ENCODE measurements at regions of chr13 and their contacts with region 1.

Region 1: GRCh38 chr13:75876360-75877050 is 240.4 kb downstream of the LMO7 start:
- DNase-seq: peak in 8 of 9 donors; percentile 13 to 61 (median 45)
- ATAC-seq: peak; percentile 86
- H3K4me3 ChIP-seq: no peak overlapping the region
- H3K4me3 Mint-ChIP-seq: peak overlapping the region in 9 of 10 donors; percentile 16 to 78 (median 59)
- H3K27ac ChIP-seq: no peak overlapping the region
- H3K27ac Mint-ChIP-seq: peak overlapping the region in 2 of 9 donors; percentile 9 to 90
- H3K4me1 ChIP-seq: peaks cover 0 to 3% of the 10 kb centered on the region in 2 donors
- H3K4me1 Mint-ChIP-seq: peaks cover 2 to 19% (median 12%) of the 10 kb centered on the region in 7 donors
- H3K27me3 ChIP-seq: no peaks in the 10 kb centered on the region
- H3K27me3 Mint-ChIP-seq: peaks cover 0 to 12% (median 5%) of the 10 kb centered on the region in 5 donors

Region 2: DNA sequence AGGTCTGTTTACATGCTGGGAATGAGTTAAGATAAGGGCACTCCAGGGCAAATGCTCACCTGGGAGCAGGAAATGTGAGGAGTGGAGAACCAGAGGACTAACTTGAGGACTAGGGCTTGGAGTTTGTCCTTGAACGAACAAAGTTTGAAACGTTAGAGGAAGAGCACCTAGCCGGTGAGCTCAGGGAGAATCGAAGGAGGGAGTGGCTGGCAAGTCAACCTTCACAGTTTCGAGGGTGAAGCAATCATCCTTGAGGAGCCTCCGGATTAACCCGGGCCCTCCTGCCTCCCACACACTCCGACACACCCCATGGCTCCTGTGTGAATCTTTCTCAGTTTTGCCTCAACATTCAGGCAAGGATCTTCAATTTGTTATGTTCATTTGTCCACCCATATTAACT is 181.8 kb before region 1 on chr13:
- CTCF ChIA-PET with region 1: interaction called, 18 read pairs
- POLR2A ChIA-PET with region 1: no interaction called
- intact Hi-C with region 1: loop called (anchors 1 to 2 kb)
- DNase-seq: no peak
- ATAC-seq: no peak
- H3K4me3 ChIP-seq: no peak overlapping the region
- H3K4me3 Mint-ChIP-seq: peak overlapping the region in 1 of 10 donors; percentile 1
- H3K27ac ChIP-seq: no peak overlapping the region
- H3K27ac Mint-ChIP-seq: no peak overlapping the region
- H3K4me1 ChIP-seq: no peaks in the 10 kb centered on the region
- H3K4me1 Mint-ChIP-seq: peaks cover 0 to 4% (median 0%) of the 10 kb centered on the region in 7 donors
- H3K27me3 ChIP-seq: no peaks in the 10 kb centered on the region
- H3K27me3 Mint-ChIP-seq: no peaks in the 10 kb centered on the region

Region 3: DNA sequence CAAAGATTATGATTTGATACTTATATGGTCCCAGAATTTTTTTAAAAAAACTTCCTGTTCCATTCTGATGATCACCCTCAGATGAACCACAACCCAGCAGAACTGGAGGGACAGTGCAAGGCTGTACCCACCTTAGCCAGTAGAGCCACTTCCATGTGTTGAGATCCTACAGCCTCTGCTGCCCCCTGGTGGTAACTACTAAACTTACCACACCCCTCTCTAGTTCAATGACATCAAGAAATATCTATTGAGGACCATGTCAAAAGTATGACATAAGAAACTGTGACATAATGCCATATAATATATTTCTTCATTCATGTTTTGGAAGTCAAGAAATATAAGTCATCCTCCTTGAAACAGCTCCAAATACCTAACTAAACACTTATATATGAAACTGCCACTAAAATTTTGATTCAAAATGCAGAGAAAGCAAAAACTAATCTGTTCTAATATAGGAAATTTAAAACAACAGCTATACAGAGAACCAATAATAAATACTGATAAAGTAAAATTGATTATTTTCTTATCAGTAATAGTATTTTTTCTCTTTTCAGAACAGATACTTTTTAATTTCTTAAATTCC is 597.1 kb after region 1 on chr13:
- CTCF ChIA-PET with region 1: interaction called, 3 read pairs
- POLR2A ChIA-PET with region 1: no interaction called
- intact Hi-C with region 1: loop called (anchors 1 kb)
- DNase-seq: peak; percentile 25 to 70 (median 61)
- ATAC-seq: peak; percentile 97
- H3K4me3 ChIP-seq: no peak overlapping the region
- H3K4me3 Mint-ChIP-seq: no peak overlapping the region
- H3K27ac ChIP-seq: no peak overlapping the region
- H3K27ac Mint-ChIP-seq: peak overlapping the region in 1 of 9 donors; percentile 21
- H3K4me1 ChIP-seq: no peaks in the 10 kb centered on the region
- H3K4me1 Mint-ChIP-seq: no peaks in the 10 kb centered on the region
- H3K27me3 ChIP-seq: no peaks in the 10 kb centered on the region
- H3K27me3 Mint-ChIP-seq: peaks cover 6 to 29% (median 7%) of the 10 kb centered on the region in 5 donors

Region 4: GRCh38 chr13:76822698-76823267 is 946.3 kb after region 1 on chr13:
- CTCF ChIA-PET with region 1: no interaction called
- POLR2A ChIA-PET with region 1: no interaction called
- intact Hi-C with region 1: loop called in 1 of 2 experiments (anchors 5 kb)
- DNase-seq: peak in 6 of 9 donors; percentile 5 to 36 (median 22)
- ATAC-seq: peak; percentile 52
- H3K4me3 ChIP-seq: no peak overlapping the region
- H3K4me3 Mint-ChIP-seq: no peak overlapping the region
- H3K27ac ChIP-seq: no peak overlapping the region
- H3K27ac Mint-ChIP-seq: no peak overlapping the region
- H3K4me1 ChIP-seq: no peaks in the 10 kb centered on the region
- H3K4me1 Mint-ChIP-seq: peaks cover 0 to 3% (median 0%) of the 10 kb centered on the region in 7 donors
- H3K27me3 ChIP-seq: no peaks in the 10 kb centered on the region
- H3K27me3 Mint-ChIP-seq: peaks cover 0 to 7% (median 0%) of the 10 kb centered on the region in 5 donors

Region 5: DNA sequence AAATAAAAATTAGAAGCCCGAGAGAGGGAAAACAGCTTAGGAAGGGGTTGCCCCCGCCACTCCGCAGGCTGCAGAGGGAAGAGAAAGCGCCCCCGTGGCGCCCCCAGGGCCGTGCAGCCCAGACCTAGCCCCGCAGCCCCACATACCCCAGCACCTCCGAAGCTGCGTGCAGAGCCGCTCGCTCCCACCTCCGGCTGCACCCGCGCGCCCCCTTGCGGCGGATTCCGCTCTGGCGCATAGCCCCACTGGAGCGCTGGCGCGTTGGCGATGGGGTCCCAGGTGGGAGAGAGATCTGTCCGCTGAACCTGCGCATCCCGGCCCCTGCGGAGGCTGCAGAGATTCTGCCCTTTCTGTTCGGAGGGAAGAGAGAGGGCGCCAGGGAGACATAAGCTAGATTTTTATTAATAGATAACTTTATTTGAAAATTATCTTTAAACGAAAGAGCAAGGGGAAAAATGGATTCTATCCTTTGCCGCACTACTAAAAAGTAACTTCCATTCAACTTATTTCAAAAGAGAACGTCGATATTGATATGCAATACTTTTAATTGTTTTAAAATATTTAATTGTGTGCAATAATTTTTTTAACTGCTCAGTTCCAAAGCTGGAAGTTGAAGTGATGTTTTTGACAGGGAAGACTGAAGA is 1103.7 kb after region 1 on chr13:
- CTCF ChIA-PET with region 1: interaction called, 4 read pairs
- POLR2A ChIA-PET with region 1: interaction called, 3 read pairs
- intact Hi-C with region 1: loop called in 1 of 2 experiments (anchors 1 kb)
- DNase-seq: peak; percentile 66 to 93 (median 82)
- ATAC-seq: peak; percentile 100
- H3K4me3 ChIP-seq: no peak overlapping the region
- H3K4me3 Mint-ChIP-seq: peak overlapping the region; percentile 25 to 78 (median 64)
- H3K27ac ChIP-seq: no peak overlapping the region
- H3K27ac Mint-ChIP-seq: no peak overlapping the region
- H3K4me1 ChIP-seq: peaks cover 0 to 5% of the 10 kb centered on the region in 2 donors
- H3K4me1 Mint-ChIP-seq: peaks cover 6 to 14% (median 9%) of the 10 kb centered on the region in 7 donors
- H3K27me3 ChIP-seq: no peaks in the 10 kb centered on the region
- H3K27me3 Mint-ChIP-seq: peaks cover 0 to 48% (median 24%) of the 10 kb centered on the region in 5 donors